ENCODE measurements at regions of chr6 and their contacts with region 1.

Region 1: GRCh38 chr6:31546962-31547726 is at the start of gene NFKBIL1:
- DNase-seq: peak; percentile 97
- H3K4me3 Mint-ChIP-seq: peak within 1 kb of the TSS; percentile 91
- H3K27ac Mint-ChIP-seq: peak within 1 kb of the TSS; percentile 91
- H3K4me1 Mint-ChIP-seq: peaks cover 51% of the 10 kb centered on the region
- H3K27me3 Mint-ChIP-seq: no peaks in the 10 kb centered on the region
- total RNA-seq, gene NFKBIL1: 14.8 and 16.2 TPM in 2 replicates

Region 2: GRCh38 chr6:31559958-31560696 is 13.0 kb after region 1 on chr6:
- intact Hi-C with region 1: loop called (anchors 1 kb)
- DNase-seq: peak; percentile 85
- H3K4me3 Mint-ChIP-seq: peak overlapping the region; percentile 78
- H3K27ac Mint-ChIP-seq: peak overlapping the region; percentile 86
- H3K4me1 Mint-ChIP-seq: peaks cover 60% of the 10 kb centered on the region
- H3K27me3 Mint-ChIP-seq: peaks cover 19% of the 10 kb centered on the region

Region 3: GRCh38 chr6:31580807-31581433 is 33.8 kb after region 1 on chr6:
- intact Hi-C with region 1: loop called (anchors 1 kb)
- DNase-seq: peak; percentile 96
- H3K4me3 Mint-ChIP-seq: peak overlapping the region; percentile 94
- H3K27ac Mint-ChIP-seq: peak overlapping the region; percentile 91
- H3K4me1 Mint-ChIP-seq: peaks cover 62% of the 10 kb centered on the region
- H3K27me3 Mint-ChIP-seq: no peaks in the 10 kb centered on the region

Region 4: GRCh38 chr6:31619805-31620585 is 72.9 kb after region 1 on chr6:
- intact Hi-C with region 1: loop called (anchors 1 kb)
- DNase-seq: peak; percentile 99
- H3K4me3 Mint-ChIP-seq: peak overlapping the region; percentile 90
- H3K27ac Mint-ChIP-seq: peak overlapping the region; percentile 95
- H3K4me1 Mint-ChIP-seq: peaks cover 46% of the 10 kb centered on the region
- H3K27me3 Mint-ChIP-seq: no peaks in the 10 kb centered on the region

Region 5: DNA sequence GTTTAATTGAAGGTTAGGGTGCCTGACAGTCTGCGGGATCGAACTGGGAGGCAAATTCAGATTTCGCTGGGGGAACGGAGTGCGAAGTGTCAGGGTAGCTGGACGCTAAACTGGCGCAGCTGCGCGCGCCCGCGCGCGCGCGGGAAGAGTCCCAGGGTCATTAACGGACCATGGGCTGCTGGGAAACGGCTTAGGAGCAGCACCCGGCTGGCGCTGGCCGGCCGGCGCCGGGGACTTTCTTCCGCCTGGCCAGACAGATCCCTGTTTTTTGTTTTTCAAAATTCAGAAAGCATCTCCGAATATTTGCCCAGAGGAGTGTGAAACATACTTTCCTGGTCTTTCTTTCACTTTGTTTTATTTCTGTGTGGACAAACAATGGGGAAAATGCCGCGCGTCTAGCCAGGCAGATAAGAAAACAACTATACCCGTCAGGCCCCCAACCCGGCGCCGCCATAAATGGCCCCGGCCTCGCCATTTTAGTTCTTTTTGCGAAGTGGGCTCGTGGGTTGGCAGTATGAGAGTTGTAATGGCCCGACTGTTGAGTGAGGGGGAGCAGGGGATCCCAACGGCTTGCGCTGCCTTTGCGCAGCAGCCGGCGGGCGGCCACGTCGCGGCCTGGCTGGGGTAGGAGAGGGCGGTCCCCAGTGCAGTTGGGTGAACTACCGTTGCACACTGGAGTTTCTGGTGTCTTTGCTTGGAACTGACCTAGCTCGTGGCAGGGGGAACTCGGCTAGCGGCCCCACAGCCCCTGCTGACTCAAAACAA is 287.5 kb after region 1 on chr6:
- intact Hi-C with region 1: loop called (anchors 2 kb)
- DNase-seq: peak; percentile 93
- H3K4me3 Mint-ChIP-seq: peak overlapping the region; percentile 97
- H3K27ac Mint-ChIP-seq: peak overlapping the region; percentile 96
- H3K4me1 Mint-ChIP-seq: peaks cover 34% of the 10 kb centered on the region
- H3K27me3 Mint-ChIP-seq: no peaks in the 10 kb centered on the region

Measured in activated CD4-positive, alpha-beta T cell treated with anti-CD3 and anti-CD28 coated beads, Interleukin-2, amount 10 ng/mL, durations not matched to agents 24 days and 14 days (primary cell).